ENCODE measurements at regions of chr1 and their contacts with region 1.

Region 1: DNA sequence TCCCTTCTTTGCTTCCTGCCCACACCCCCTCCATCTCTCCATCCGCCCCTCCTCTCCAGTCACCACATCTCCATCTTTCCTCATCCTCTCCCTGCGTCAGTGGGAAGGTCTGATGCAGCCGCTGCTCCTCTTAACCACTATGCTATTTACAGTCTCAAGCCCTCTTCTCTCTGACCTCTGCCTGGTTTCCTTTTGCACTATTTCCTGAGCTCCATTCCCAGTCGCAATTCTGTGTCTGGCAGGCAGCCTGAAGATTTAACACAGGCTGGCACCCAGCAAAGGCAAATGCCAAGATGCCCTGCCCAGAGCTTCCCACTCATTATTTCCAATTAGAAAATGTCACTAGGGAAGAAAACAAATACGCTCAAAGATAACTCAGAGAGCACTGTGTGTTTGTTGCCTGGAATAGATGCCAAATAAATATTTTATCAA is 89.6 kb upstream of the LPGAT1 start:
- DNase-seq: no peak
- H3K4me3 ChIP-seq: no peak overlapping the region
- H3K27ac ChIP-seq: no peak overlapping the region
- H3K4me1 ChIP-seq: no peaks in the 10 kb centered on the region
- CTCF ChIP-seq: no peak

Region 2: GRCh38 chr1:211613093-211613947 is 306.8 kb before region 1 on chr1:
- CTCF ChIA-PET with region 1: no interaction called
- POLR2A ChIA-PET with region 1: no interaction called
- intact Hi-C with region 1: no loop called
- DNase-seq: no peak
- H3K4me3 ChIP-seq: no peak overlapping the region
- H3K27ac ChIP-seq: no peak overlapping the region
- H3K4me1 ChIP-seq: no peaks in the 10 kb centered on the region
- CTCF ChIP-seq: no peak

Region 3: GRCh38 chr1:211732293-211732980 is 187.7 kb before region 1 on chr1:
- CTCF ChIA-PET with region 1: no interaction called
- POLR2A ChIA-PET with region 1: interaction called, 10 read pairs
- intact Hi-C with region 1: no loop called
- DNase-seq: peak; percentile 49
- H3K4me3 ChIP-seq: no peak overlapping the region
- H3K27ac ChIP-seq: no peak overlapping the region
- H3K4me1 ChIP-seq: peaks cover 12% of the 10 kb centered on the region
- CTCF ChIP-seq: no peak